ENCODE measurements at regions of chr15 and their contacts with region 1.

Region 1: GRCh38 chr15:36579792-36580431 is 486 bp downstream of the CDIN1 start:
- DNase-seq: no peak
- H3K4me3 ChIP-seq: peak overlapping the region; percentile 75
- H3K4me3 Mint-ChIP-seq: peak overlapping the region; percentile 85
- H3K27ac Mint-ChIP-seq: peak overlapping the region; percentile 97
- H3K4me1 ChIP-seq: peaks cover 3% of the 10 kb centered on the region; the same call in 1 of the 2 replicates
- H3K4me1 Mint-ChIP-seq: peaks cover 5% of the 10 kb centered on the region
- H3K27me3 ChIP-seq: no peaks in the 10 kb centered on the region
- H3K27me3 Mint-ChIP-seq: no peaks in the 10 kb centered on the region
- CTCF ChIP-seq: no peak

Region 2: GRCh38 chr15:36506733-36507356 is 73.1 kb before region 1 on chr15:
- CTCF ChIA-PET with region 1: no interaction called
- POLR2A ChIA-PET with region 1: no interaction called
- intact Hi-C with region 1: loop called (anchors 1 kb)
- DNase-seq: peak; percentile 33 to 42
- H3K4me3 ChIP-seq: no peak overlapping the region
- H3K4me3 Mint-ChIP-seq: peak overlapping the region; percentile 28
- H3K27ac Mint-ChIP-seq: no peak overlapping the region
- H3K4me1 ChIP-seq: peaks cover 44% of the 10 kb centered on the region
- H3K4me1 Mint-ChIP-seq: peaks cover 10% of the 10 kb centered on the region
- H3K27me3 ChIP-seq: no peaks in the 10 kb centered on the region
- H3K27me3 Mint-ChIP-seq: no peaks in the 10 kb centered on the region
- CTCF ChIP-seq: no peak

Region 3: DNA sequence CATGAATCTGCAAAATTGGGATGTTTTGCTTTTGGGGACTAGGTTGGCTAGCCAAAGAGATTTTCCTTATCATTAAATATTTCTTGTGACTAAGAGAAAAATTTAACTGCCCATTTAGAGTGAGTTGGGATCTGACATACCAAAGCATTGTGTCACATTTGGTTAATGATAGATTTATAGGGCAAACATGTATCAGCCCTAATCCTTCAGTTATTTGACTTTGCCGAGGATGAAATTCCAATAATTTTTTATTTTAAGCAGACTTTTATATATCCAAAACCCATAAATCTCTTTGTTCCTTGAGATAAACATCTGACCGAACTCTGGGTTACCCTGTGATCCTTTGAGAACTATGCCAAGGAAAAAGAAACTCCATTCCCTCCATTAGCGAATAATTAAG is 218.5 kb after region 1 on chr15:
- CTCF ChIA-PET with region 1: no interaction called
- POLR2A ChIA-PET with region 1: no interaction called
- intact Hi-C with region 1: loop called (anchors 5 kb)
- DNase-seq: no peak
- H3K4me3 ChIP-seq: no peak overlapping the region
- H3K4me3 Mint-ChIP-seq: no peak overlapping the region
- H3K27ac Mint-ChIP-seq: no peak overlapping the region
- H3K4me1 ChIP-seq: peaks cover 21% of the 10 kb centered on the region
- H3K4me1 Mint-ChIP-seq: peaks cover 9% of the 10 kb centered on the region
- H3K27me3 ChIP-seq: no peaks in the 10 kb centered on the region
- H3K27me3 Mint-ChIP-seq: no peaks in the 10 kb centered on the region
- CTCF ChIP-seq: no peak

Region 4: GRCh38 chr15:36844534-36844998 is 264.7 kb after region 1 on chr15:
- CTCF ChIA-PET with region 1: no interaction called
- POLR2A ChIA-PET with region 1: no interaction called
- intact Hi-C with region 1: no loop called
- DNase-seq: no peak
- H3K4me3 ChIP-seq: no peak overlapping the region
- H3K4me3 Mint-ChIP-seq: no peak overlapping the region
- H3K27ac Mint-ChIP-seq: no peak overlapping the region
- H3K4me1 ChIP-seq: no peaks in the 10 kb centered on the region
- H3K4me1 Mint-ChIP-seq: peaks cover 7% of the 10 kb centered on the region
- H3K27me3 ChIP-seq: no peaks in the 10 kb centered on the region
- H3K27me3 Mint-ChIP-seq: peaks cover 11% of the 10 kb centered on the region
- CTCF ChIP-seq: no peak